SK-N-SH (cell line): ENCODE measurements at regions of chr1 and their contacts with region 1.

Region 1: DNA sequence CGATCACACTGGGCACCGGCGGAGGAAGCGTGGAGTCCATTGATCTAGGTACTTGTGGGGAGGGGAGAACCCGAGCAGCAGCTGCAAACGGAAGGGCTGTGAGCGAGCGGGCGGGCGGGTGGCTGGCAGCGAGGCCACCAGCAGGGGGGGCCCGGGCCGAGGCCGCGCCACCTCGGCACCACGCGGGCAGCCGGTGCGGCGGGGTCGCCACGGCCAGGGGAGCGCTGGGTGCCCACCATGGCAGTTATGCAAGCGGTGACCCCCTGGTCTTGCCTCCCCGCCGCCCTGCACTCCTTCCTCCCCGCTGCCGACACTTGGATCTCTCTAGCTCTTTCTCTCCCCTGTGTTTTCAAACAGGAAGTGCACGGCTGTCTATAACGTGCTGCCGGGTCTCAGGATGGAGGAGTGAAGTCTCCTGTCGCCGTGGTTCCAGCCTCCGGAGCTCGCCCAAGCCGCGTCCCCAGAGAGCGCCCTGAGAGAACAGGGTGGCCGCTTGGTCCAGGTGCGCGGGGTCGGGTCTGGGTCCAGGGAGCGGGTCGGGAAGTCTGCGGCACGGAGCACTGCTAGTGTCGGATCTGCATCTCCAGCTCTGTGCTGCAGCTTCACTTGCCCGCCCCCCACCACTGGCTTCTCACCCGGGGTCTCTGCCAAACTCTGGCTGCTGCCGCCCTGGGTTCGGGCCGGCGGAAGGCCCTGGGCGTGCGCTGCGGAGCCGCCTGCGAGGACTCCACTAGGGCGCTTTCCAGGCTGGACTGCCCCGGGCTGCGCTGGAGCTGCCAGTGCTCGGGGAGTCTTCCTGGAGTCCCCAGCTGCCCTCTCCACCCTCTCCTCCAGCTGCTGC is 22.7 kb downstream of the LRRC8D start:
- DNase-seq: peak; percentile 93
- H3K4me3 ChIP-seq: peak overlapping the region; percentile 72 to 77
- H3K27ac ChIP-seq: peak overlapping the region; percentile 43 to 55; a peak in 3 of 4 replicates
- H3K4me1 ChIP-seq: peaks cover 7 to 22% of the 10 kb centered on the region in 2 experiments; a peak in 3 of 4 replicates
- H3K27me3 ChIP-seq: no peaks in the 10 kb centered on the region
- CTCF ChIP-seq: peak; percentile 72
- EP300 ChIP-seq: no peak
- RAD21 ChIP-seq: peak; percentile 46

Region 2: GRCh38 chr1:89708751-89709375 is 134.6 kb before region 1 on chr1:
- CTCF ChIA-PET with region 1: no interaction called
- POLR2A ChIA-PET with region 1: no interaction called
- DNase-seq: no peak
- H3K4me3 ChIP-seq: no peak overlapping the region
- H3K27ac ChIP-seq: no peak overlapping the region
- H3K4me1 ChIP-seq: peaks cover 6 to 10% of the 10 kb centered on the region in 2 experiments; a peak in 3 of 4 replicates
- H3K27me3 ChIP-seq: no peaks in the 10 kb centered on the region
- CTCF ChIP-seq: no peak
- EP300 ChIP-seq: no peak
- RAD21 ChIP-seq: no peak

Region 3: GRCh38 chr1:89833183-89834082 is 10.1 kb before region 1 on chr1:
- CTCF ChIA-PET with region 1: interaction called, 19 read pairs
- POLR2A ChIA-PET with region 1: no interaction called
- DNase-seq: no peak
- H3K4me3 ChIP-seq: no peak overlapping the region
- H3K27ac ChIP-seq: no peak overlapping the region
- H3K4me1 ChIP-seq: peaks cover 0 to 2% of the 10 kb centered on the region in 2 experiments; a peak in 2 of 4 replicates
- H3K27me3 ChIP-seq: no peaks in the 10 kb centered on the region
- CTCF ChIP-seq: no peak
- EP300 ChIP-seq: no peak
- RAD21 ChIP-seq: no peak

Region 4: DNA sequence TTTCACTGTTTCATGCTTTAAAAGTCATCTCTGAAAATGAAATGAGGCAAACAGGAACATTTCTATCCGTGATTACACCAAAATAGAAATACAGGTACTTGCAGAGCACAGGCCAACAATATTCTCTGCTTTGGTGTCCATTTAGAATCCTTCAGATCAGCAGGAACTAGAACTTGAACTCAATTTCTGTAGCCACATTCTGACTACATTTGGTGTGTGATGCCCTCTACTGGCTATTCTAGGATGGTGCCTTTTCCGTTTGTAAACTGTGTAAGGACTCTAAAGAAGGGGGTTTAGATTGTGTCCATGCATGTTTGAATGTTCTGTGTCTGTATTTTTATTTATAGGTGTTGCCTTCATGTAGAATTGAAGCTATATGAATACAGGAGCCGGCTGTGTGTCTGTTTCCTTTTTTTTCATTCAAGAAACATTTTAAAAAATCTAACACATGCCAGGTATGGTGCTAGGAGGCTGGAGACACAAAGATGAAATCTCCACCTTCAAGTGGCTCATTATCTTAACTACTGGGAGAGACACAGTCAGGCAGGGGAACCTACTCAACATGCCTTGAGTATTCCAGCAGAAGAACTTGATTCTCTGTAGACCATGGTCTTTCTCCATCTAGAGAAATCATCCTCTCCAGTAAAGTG is 143.8 kb after region 1 on chr1:
- CTCF ChIA-PET with region 1: interaction called, 13 read pairs
- POLR2A ChIA-PET with region 1: no interaction called
- DNase-seq: peak; percentile 81
- H3K4me3 ChIP-seq: no peak overlapping the region; a peak in 1 of 4 replicates
- H3K27ac ChIP-seq: no peak overlapping the region
- H3K4me1 ChIP-seq: peaks cover 0 to 5% of the 10 kb centered on the region in 2 experiments; a peak in 3 of 4 replicates
- H3K27me3 ChIP-seq: no peaks in the 10 kb centered on the region
- CTCF ChIP-seq: peak; percentile 90
- EP300 ChIP-seq: no peak
- RAD21 ChIP-seq: peak; percentile 97